ENCODE measurements at regions of chr20 and their contacts with region 1.

Region 1: GRCh38 chr20:53939572-53940359 is 130.6 kb downstream of the BCAS1 start:
- DNase-seq: peak; percentile 94

Region 2: DNA sequence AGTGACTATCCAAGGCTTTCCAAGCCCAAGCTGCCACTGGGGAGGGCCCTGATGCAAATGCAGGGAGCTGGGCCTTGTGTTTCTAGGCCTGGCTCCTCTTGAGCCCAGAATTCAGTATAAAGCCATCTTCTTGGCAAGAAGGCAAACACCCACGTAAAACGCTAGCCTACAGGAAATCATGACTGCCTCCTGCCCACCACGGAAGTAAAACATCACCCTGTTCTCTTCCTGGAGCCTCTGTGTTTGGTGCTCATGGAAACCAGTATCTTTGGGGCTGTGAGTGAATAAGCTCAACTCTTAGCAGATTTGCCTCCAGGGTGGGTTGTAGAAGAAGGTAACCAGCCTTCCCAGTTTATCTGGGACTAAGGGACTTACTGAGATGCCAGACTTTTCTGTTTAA is 617.1 kb before region 1 on chr20:
- intact Hi-C with region 1: loop called (anchors 10 kb)
- DNase-seq: no peak

Region 3: GRCh38 chr20:53869466-53870258 is 70.1 kb before region 1 on chr20:
- intact Hi-C with region 1: no loop called
- DNase-seq: no peak

Region 4: DNA sequence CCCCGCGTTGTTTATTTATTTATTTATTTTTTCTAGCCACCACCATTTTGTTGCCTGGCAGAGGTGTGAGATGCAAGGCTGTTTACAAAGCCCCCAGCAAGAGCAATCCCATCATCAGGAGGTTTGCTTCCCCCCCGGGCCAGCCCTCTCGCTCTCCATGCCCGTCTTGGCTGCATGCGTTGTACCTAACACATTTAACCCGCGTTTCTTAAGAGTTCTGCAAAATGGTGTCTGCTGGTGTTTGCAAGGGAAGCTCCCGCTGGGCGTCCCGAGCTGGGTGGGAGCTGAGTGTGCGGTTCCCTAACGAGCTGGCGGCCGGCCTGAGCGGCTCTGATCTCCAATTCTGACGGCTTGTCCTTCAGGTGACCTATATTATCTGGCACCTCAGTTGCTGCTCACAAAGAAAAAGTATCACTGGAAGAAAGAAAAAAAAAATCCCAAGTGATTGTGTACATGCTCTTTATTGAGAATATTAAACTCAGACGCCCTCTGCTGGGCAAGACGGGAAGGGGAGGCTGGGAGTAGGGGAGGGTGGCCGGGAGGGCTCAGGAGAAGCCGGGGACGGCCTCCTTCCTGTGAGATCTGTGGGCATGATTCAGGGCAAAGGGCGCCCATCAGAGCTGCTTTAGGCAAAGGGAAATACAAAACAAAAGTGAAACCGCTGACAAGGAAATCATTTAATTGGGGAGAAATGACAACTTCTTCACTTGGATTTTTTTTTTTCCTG is 24.2 kb before region 1 on chr20:
- intact Hi-C with region 1: loop called (anchors 1 kb)
- DNase-seq: peak; percentile 97

Region 5: GRCh38 chr20:54062812-54063280 is 123.1 kb after region 1 on chr20:
- intact Hi-C with region 1: no loop called
- DNase-seq: no peak